GM10248 (cell line): ENCODE measurements at regions of chr4 and their contacts with region 1.

Region 1: DNA sequence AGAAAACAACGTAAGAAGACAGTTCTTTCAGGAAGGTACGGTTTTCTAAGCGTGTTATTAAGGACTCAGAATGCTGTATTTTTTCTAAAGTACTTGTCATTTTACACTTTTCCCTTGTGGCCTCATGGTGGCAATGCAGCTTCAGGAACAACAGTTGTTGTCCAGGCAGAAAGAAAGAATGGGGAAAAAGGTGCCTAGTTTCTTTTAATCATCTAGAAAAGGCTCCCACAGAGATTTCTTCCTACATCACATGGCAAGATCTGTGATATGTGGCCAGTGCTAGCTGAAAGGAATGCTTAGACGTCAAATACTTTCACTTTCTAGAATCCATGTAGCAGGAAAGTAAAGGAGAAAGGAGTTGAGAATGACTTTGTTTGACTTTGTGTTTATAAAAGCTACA is 49.0 kb upstream of the TRAM1L1 start:
- DNase-seq: peak; percentile 7
- CTCF ChIP-seq: peak; percentile 60

Region 2: DNA sequence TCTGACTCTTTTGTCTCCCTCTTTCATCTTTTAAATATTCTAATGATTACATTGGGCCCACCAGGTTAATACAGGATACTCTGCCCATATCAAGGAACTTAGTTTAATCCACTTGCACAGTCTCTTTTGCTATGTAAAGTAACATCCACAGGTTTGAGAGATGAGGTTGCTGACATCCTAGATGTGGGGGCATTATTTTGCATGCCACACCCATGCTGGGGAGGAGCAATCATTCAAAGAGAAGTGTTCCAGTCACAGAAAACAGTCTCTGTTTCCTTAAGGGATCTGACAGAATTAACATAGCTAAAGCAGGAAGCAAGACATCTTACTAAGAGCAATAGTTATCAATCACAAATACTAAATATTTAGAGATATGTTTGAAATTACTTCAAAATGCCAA is 37.5 kb before region 1 on chr4:
- CTCF ChIA-PET with region 1: no interaction called
- POLR2A ChIA-PET with region 1: no interaction called
- DNase-seq: no peak
- CTCF ChIP-seq: no peak

Region 3: GRCh38 chr4:117225471-117225870 is 91.1 kb after region 1 on chr4:
- CTCF ChIA-PET with region 1: no interaction called
- POLR2A ChIA-PET with region 1: no interaction called
- DNase-seq: no peak
- CTCF ChIP-seq: no peak

Region 4: GRCh38 chr4:117400039-117400835 is 265.9 kb after region 1 on chr4:
- CTCF ChIA-PET with region 1: no interaction called
- POLR2A ChIA-PET with region 1: no interaction called
- DNase-seq: no peak
- CTCF ChIP-seq: no peak

Region 5: DNA sequence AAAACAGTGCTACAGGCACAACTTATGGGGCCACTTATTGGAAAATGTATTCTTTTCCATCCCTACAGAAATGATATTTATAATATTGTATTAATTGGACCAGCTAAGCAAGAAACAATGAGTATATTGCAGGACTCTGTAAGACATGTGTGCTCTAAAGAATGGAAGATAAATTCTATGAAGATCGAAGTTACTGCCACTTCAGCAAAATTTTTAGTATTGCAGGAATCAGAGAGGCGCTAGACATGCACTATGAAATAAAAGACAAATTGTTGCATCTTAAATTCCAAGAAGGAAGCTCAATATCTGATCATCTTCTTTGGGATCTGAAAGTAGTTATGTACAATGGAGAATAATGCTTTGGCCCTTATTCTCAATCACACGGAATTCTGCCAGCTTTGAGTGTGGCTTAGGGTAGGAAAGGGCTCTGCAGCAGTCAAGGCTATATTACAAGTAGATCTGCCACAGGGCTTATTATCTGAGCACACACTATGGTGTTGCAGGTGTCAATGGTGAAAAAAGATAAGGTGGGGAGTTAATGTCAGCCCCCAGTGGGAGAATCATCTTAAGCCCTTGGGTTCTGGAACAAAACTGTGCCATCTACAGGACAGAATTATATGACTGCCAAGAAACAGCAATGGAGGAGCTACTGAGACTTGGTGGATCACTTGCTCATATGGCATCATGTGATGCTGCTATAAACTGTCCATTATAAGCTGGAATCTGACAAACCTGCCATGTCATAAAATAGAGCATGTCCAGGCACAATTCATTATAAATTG is 565.9 kb after region 1 on chr4:
- CTCF ChIA-PET with region 1: interaction called, 11 read pairs
- POLR2A ChIA-PET with region 1: no interaction called
- DNase-seq: no peak
- CTCF ChIP-seq: peak; percentile 23